MCF 10A (cell line): ENCODE measurements at regions of chr18 and their contacts with region 1.

Region 1: GRCh38 chr18:54671291-54671881 is 80.3 kb downstream of the DYNAP start:
- DNase-seq: peak; percentile 59
- H3K4me3 Mint-ChIP-seq: no peak overlapping the region
- H3K27ac Mint-ChIP-seq: no peak overlapping the region
- H3K4me1 Mint-ChIP-seq: no peaks in the 10 kb centered on the region
- H3K27me3 Mint-ChIP-seq: no peaks in the 10 kb centered on the region
- CTCF ChIP-seq: peak; percentile 49

Region 2: DNA sequence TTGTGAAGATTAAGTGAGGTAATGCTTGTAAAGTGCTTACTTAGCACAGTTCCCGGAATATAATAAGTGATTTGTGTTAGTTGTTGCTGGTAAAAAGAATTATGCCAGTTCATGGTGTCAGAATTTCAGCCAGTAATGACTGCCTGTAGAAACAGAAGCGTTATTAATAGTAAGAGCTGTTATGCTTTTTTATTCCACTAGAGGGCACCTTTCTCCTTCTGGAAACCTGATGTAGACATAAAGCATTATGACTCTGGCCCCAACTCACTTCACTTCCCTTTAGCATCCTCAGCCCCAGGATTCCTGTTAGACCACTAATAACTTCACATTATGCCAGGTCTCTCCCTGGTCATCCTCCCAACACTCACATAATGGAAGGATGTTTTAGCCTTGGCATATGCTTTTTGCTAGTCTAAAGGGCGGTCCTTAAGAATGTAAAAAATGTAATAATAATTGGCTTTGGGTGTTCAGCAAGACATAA is 278.8 kb before region 1 on chr18:
- CTCF ChIA-PET with region 1: interaction called, 9 read pairs
- POLR2A ChIA-PET with region 1: interaction called, 4 read pairs
- intact Hi-C with region 1: loop called (anchors 1 kb)
- DNase-seq: peak; percentile 71
- H3K4me3 Mint-ChIP-seq: no peak overlapping the region
- H3K27ac Mint-ChIP-seq: no peak overlapping the region
- H3K4me1 Mint-ChIP-seq: peaks cover 13% of the 10 kb centered on the region
- H3K27me3 Mint-ChIP-seq: no peaks in the 10 kb centered on the region
- CTCF ChIP-seq: peak; percentile 63

Region 3: DNA sequence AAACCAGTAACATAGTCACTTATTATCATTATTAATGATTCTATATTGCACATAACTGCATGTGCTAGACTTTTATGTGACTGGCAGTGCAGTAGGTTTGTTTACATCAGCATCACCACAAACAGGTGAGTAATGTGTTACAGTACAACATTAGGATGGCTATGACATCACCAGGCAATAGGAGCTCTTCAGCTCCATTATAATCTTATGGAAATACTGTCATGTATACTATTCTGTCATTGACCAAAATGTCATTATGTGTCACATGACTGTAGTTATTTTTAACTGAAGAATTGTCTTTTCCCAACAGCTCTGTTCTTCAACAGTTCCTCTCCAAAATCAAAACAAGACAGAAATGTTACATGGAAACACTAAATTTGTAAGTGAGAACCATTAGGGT is 217.4 kb before region 1 on chr18:
- CTCF ChIA-PET with region 1: interaction called, 10 read pairs
- POLR2A ChIA-PET with region 1: no interaction called
- intact Hi-C with region 1: no loop called
- DNase-seq: no peak
- H3K4me3 Mint-ChIP-seq: no peak overlapping the region
- H3K27ac Mint-ChIP-seq: no peak overlapping the region
- H3K4me1 Mint-ChIP-seq: no peaks in the 10 kb centered on the region
- H3K27me3 Mint-ChIP-seq: no peaks in the 10 kb centered on the region
- CTCF ChIP-seq: no peak

Region 4: DNA sequence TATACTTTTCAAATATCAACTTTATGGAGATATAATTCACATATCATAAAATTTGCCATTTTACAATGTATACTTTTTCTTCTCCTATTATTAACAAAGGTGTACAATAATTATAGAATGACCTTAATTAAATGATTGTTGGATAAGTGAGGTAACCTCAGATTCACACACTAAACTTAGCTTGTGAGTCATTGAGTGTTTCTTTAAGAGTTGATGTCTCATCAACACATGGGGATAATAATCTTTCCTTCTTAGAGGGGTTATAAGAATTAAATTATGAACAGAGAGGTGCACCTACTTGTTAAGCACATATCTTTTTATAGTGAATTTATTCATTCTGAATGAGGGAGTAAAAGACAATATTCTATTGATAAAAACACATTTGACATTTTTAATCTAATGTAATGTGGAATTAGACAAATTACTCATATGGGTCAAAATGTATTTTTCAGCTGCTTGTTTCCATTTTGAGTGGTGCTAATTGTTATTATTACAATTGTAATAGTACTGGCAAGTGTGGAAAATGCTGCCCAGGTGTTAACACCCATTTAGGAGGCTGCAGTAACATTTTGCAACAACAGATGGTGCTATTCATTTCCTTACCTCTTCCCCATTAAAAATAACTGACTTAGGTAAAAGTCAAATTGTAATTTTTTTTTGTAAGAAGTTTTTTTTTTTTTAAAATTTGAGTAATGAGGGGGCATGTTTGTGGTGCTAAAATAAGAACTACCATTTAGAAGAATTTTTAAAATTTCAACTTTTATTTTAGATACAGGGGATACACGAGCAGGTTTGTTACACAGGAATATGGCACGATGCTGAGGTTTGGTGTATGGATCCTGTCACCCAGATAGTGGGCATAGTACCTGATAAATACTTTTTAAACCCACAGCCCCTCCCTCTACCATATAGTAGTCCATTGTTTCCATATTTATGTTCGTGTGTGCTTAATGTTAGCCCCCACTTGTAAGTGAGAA is 112.5 kb before region 1 on chr18:
- CTCF ChIA-PET with region 1: interaction called, 30 read pairs
- POLR2A ChIA-PET with region 1: no interaction called
- intact Hi-C with region 1: loop called (anchors 1 kb)
- DNase-seq: peak; percentile 60
- H3K4me3 Mint-ChIP-seq: no peak overlapping the region
- H3K27ac Mint-ChIP-seq: no peak overlapping the region
- H3K4me1 Mint-ChIP-seq: no peaks in the 10 kb centered on the region
- H3K27me3 Mint-ChIP-seq: no peaks in the 10 kb centered on the region
- CTCF ChIP-seq: peak; percentile 63

Region 5: DNA sequence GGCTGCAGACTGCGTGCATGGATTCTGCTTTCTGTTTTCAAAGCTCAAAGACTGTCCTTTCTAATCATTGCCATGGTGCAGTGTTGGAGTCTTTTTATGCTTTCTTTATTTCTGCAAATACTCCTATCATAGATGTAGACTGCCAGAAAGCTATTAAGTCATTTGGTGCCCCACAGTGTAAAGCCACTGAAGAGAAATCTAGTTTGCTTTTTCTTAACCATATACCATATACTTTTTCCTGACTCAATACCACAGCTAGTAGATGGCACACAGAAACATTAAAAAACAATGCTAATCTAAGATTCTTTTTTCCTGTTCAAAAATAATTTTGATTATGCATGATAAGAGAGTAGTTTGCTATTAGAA is 47.0 kb after region 1 on chr18:
- CTCF ChIA-PET with region 1: no interaction called
- POLR2A ChIA-PET with region 1: no interaction called
- intact Hi-C with region 1: no loop called
- DNase-seq: no peak
- H3K4me3 Mint-ChIP-seq: no peak overlapping the region
- H3K27ac Mint-ChIP-seq: no peak overlapping the region
- H3K4me1 Mint-ChIP-seq: no peaks in the 10 kb centered on the region
- H3K27me3 Mint-ChIP-seq: no peaks in the 10 kb centered on the region
- CTCF ChIP-seq: no peak

Region 6: DNA sequence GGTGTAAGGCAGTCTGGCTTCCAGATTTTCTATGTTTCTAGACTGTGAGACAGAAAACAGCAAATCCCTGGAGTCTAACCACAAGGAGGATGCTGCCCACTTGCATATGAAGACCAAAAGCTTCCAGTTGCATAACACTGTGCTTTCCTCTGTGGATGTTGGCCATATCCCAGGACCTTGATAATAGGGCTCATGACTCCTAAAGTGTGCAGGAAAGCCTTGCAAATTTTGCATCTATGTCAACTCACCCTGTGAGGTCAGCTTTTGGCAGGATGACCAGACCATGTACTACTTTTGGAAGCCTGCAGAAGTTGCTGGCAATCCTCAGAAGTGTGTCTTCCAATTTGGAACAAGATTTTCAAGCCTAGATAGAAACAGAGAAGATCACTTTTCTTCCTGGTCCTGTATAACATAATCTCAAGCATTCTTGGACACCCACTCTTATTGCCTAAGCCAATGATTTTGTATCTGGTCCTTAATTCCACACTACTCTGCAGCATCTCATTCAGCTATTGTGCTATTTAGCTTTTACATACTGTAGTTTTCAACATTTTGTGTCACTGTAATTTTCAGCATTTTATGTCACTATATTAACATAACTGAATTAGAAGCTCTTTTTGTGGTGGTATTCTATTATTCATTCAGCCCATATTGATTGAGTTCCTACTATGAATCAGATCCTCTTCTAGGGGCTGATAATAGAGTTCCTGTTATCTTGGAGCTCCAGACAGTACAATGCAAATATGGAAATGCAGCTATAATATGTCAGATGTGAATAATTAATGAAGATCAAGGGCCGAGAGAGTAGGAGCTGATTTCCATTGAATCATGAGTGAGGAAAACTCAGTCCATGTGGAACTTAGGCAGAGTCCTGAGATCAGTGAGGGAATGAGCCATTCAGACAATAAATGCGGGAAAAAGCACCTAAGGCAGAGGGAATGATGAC is 71.5 kb after region 1 on chr18:
- CTCF ChIA-PET with region 1: no interaction called
- POLR2A ChIA-PET with region 1: no interaction called
- intact Hi-C with region 1: no loop called
- DNase-seq: peak; percentile 99
- H3K4me3 Mint-ChIP-seq: no peak overlapping the region
- H3K27ac Mint-ChIP-seq: peak overlapping the region; percentile 69
- H3K4me1 Mint-ChIP-seq: peaks cover 45% of the 10 kb centered on the region
- H3K27me3 Mint-ChIP-seq: no peaks in the 10 kb centered on the region
- CTCF ChIP-seq: no peak

Region 7: DNA sequence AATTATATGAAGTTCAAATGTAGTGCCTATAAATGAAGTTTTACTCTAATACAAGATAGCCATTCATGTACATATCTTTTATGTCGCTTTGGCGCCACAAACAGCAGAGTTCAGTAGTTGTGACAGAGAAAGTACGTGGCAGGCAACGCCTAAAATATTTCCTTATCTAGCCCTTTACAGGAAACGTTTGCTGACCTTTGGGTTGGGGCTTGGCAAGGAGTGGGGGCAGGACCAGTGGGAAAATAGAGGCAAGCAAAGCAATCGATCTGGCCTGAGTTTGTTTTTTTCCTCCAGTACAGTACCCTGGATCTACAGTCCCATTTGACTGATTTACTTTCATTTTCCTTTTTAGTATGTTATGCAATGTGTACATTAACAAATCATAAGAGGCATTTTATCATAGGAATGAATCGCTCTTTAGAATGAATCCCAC is 274.8 kb after region 1 on chr18:
- CTCF ChIA-PET with region 1: interaction called, 12 read pairs
- POLR2A ChIA-PET with region 1: no interaction called
- intact Hi-C with region 1: no loop called
- DNase-seq: peak; percentile 56
- H3K4me3 Mint-ChIP-seq: peak overlapping the region; percentile 77
- H3K27ac Mint-ChIP-seq: peak overlapping the region; percentile 95
- H3K4me1 Mint-ChIP-seq: peaks cover 9% of the 10 kb centered on the region
- H3K27me3 Mint-ChIP-seq: no peaks in the 10 kb centered on the region
- CTCF ChIP-seq: no peak